ENCODE measurements at regions of chr12 and their contacts with region 1.

Region 1: GRCh38 chr12:89529738-89530137 is 3.9 kb upstream of the POC1B start:
- DNase-seq: no peak
- ATAC-seq: peak; percentile 51
- H3K4me3 ChIP-seq: no peak overlapping the region
- H3K27ac ChIP-seq: no peak overlapping the region
- H3K4me1 ChIP-seq: peaks cover 8% of the 10 kb centered on the region
- H3K27me3 ChIP-seq: no peaks in the 10 kb centered on the region
- CTCF ChIP-seq: peak; percentile 76

Region 2: DNA sequence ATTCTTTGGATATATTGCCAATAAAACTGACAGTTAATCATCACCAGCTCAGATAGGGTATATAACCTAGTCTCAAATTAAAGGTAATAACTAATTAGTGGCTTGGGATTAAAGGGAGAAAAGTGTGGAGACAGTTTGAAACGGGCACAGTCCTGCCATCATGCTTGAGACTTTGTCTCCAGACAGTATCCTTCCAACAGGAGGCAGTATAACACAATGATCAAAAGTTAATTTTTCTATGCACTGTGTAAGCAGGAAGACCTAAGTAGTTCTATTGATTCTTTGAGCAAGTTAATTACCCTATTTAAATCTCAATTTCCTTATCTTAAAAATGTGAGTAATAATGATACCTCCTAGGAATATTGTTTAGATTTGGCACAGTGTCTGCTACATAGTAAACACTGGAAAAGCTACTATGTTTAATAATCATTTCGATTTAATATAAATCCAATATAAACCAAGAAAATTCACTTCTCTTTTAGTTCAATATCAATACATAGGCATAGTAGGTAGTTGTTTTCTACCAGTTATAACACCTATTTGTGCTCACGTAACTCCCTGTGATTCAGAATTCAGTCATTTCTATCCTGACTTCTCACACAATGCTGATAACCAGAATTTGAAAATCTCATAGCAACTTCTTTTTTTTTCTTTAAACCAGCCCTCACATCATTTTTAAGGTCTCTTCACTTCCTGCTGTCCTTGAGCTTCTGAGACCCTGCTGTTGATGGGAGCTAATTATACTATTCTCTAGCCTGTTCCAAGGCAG is 58.8 kb before region 1 on chr12:
- intact Hi-C with region 1: loop called (anchors 10 kb)
- DNase-seq: no peak
- ATAC-seq: peak; percentile 90
- H3K4me3 ChIP-seq: no peak overlapping the region
- H3K27ac ChIP-seq: no peak overlapping the region
- H3K4me1 ChIP-seq: no peaks in the 10 kb centered on the region
- H3K27me3 ChIP-seq: no peaks in the 10 kb centered on the region
- CTCF ChIP-seq: peak; percentile 77

Measured in upper lobe of right lung (tissue), 1 donor.